ENCODE measurements at regions of chr1 and their contacts with region 1.

Region 1: GRCh38 chr1:175481126-175482066 is 262.0 kb downstream of the TNR start:
- DNase-seq: peak; percentile 18
- ATAC-seq: peak; percentile 80; the same call in 1 of the 2 replicates
- H3K4me3 ChIP-seq: no peak overlapping the region
- H3K27ac ChIP-seq: no peak overlapping the region
- H3K4me1 ChIP-seq: no peaks in the 10 kb centered on the region
- H3K27me3 ChIP-seq: peaks cover 8% of the 10 kb centered on the region
- CTCF ChIP-seq: peak; percentile 73

Region 2: GRCh38 chr1:175763797-175764196 is 282.4 kb after region 1 on chr1:
- CTCF ChIA-PET with region 1: no interaction called
- POLR2A ChIA-PET with region 1: no interaction called
- in situ Hi-C with region 1: no loop called
- intact Hi-C with region 1: loop called (anchors 5 kb)
- DNase-seq: no peak
- ATAC-seq: no peak
- H3K4me3 ChIP-seq: no peak overlapping the region
- H3K27ac ChIP-seq: no peak overlapping the region
- H3K4me1 ChIP-seq: no peaks in the 10 kb centered on the region
- H3K27me3 ChIP-seq: peaks cover 2% of the 10 kb centered on the region; the same call in 1 of the 2 replicates
- CTCF ChIP-seq: no peak